Calu3 (cell line): ENCODE measurements at regions of chr4 and their contacts with region 1.

Region 1: GRCh38 chr4:81676537-81676936 is 204.8 kb upstream of the RASGEF1B start:
- DNase-seq: no peak
- H3K4me3 Mint-ChIP-seq: no peak overlapping the region
- H3K27ac Mint-ChIP-seq: no peak overlapping the region
- H3K4me1 Mint-ChIP-seq: no peaks in the 10 kb centered on the region
- H3K27me3 Mint-ChIP-seq: no peaks in the 10 kb centered on the region
- CTCF ChIP-seq: no peak

Region 2: DNA sequence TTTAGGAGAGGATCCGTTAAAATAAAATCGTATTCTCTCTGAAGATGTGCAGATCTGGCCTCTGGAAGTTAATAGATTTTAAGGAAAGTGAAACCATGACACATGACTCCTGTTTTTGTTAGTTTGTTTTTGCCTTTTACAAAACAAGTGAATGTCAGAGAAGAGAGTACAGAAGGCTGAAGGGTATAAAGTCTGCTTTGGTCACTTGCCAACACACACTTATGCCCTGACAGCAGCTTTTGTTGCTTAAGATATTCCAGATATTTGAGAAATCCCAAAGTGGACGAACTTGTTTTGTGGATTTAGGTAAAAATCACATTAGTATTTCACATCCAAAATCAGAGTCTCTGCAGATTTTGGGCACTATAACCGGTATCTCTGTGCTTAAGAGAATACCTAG is 12.5 kb before region 1 on chr4:
- CTCF ChIA-PET with region 1: no interaction called
- intact Hi-C with region 1: loop called (anchors 1 kb)
- DNase-seq: no peak
- H3K4me3 Mint-ChIP-seq: no peak overlapping the region
- H3K27ac Mint-ChIP-seq: no peak overlapping the region
- H3K4me1 Mint-ChIP-seq: peaks cover 8% of the 10 kb centered on the region
- H3K27me3 Mint-ChIP-seq: no peaks in the 10 kb centered on the region
- CTCF ChIP-seq: no peak